HEK293T (cell line): ENCODE measurements at regions of chr1 and their contacts with region 1.

Region 1: DNA sequence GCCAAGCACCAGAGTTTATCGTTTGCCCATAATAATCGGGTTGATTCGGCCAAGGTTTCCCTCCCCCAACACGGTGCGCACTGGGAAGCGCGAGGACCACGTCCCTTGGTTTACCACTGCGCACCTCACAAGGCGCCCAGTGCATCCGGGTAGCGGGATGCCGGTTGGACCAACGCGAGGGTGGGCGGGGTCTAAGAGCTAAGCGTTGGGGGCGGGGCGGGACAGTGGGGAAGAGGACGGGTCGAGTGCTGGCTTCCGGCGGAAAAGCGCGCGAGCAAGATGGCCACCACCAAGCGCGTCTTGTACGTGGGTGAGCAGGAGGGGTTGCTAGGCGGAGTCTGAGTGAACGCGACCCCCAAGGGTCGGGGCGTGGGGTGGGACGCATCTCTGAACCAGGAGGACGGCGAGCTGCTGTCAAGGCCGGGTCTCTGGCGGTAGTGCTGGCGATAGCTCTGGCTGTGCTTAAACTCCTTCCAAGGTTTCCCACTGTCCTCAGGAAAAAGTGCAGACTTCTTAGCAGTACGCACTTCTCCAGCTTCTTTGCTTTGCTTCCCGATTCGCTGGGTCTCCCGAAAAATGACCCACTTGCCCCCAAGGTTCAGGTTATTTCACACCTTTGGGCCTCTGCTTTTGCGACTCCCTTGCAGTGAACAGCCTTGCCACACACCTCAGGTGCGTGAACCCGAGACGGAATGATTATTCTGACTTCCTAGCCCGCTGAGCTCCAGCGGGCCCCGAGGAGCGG is at the start of gene PPIE:
- DNase-seq: peak; percentile 96

Region 2: GRCh38 chr1:39672551-39672947 is 66.2 kb before region 1 on chr1:
- CTCF ChIA-PET with region 1: no interaction called
- POLR2A ChIA-PET with region 1: interaction called, 11 read pairs
- DNase-seq: peak; percentile 26

Region 3: GRCh38 chr1:39711104-39711965 is 27.5 kb before region 1 on chr1:
- CTCF ChIA-PET with region 1: no interaction called
- POLR2A ChIA-PET with region 1: interaction called, 15 read pairs
- DNase-seq: no peak

Region 4: DNA sequence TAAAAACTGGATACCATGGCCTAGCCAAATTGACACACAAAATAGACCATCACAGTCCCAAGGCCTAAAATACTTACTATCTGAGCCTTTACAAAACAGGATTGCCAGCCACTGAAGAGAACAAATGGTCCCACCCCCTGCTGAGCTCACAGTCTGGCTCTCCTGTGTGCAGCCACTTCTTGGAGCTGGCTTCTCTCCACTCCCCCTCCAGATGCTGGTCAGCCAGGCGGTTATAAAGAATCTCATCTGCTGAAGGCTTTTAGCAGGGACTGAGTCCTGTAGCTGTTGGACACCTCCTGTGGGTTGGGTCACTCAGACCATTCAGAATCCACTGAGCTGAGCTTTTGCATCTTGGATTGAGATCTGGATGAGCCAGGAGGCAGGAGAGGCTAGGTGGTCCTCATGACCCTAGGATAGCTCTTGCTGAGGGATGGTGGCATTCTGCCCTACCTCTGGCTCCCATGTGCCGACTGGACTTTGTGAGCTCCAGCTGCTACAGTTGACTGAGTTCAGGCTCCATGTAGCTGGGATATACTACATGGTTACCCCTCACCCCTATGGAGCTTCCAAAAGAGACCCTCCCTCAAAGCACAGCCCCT is 16.2 kb after region 1 on chr1:
- CTCF ChIA-PET with region 1: no interaction called
- POLR2A ChIA-PET with region 1: interaction called, 10 read pairs
- DNase-seq: no peak

Region 5: GRCh38 chr1:39788758-39789570 is 50.2 kb after region 1 on chr1 and contains the start of gene BMP8B:
- CTCF ChIA-PET with region 1: no interaction called
- POLR2A ChIA-PET with region 1: interaction called, 11 read pairs
- DNase-seq: peak; percentile 76

Region 6: DNA sequence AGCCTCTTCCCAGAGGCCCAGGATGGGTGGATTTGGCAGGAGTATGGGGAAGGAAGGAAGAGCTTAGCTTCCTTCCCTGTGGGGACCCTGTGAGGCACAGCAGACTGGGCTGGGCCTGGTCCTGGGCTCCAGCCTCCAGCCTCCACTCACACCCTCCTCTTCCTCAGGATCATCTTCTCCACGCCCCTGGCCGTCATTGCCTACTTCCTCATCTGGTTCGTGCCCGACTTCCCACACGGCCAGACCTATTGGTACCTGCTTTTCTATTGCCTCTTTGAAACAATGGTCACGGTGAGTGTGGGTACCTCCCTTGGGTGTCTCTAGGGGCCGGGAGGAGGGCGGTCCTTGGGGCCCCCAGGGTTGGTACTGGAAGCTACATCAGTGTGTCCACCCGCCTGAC is 226.2 kb after region 1 on chr1:
- CTCF ChIA-PET with region 1: no interaction called
- POLR2A ChIA-PET with region 1: no interaction called
- DNase-seq: no peak